Activated CD8-positive, alpha-beta T cell treated with anti-CD3 and anti-CD28 coated beads, Interleukin-2, amount 10 ng/mL, durations not matched to agents 7 days and 5 days (primary cell): ENCODE measurements at regions of chr9 and their contacts with region 1.

Region 1: GRCh38 chr9:128846680-128847030 is 17.1 kb upstream of the SPOUT1 start:
- DNase-seq: no peak
- ATAC-seq: no peak
- H3K4me3 Mint-ChIP-seq: no peak overlapping the region
- H3K27ac Mint-ChIP-seq: no peak overlapping the region
- H3K4me1 Mint-ChIP-seq: peaks cover 3% of the 10 kb centered on the region
- H3K27me3 Mint-ChIP-seq: no peaks in the 10 kb centered on the region

Region 2: DNA sequence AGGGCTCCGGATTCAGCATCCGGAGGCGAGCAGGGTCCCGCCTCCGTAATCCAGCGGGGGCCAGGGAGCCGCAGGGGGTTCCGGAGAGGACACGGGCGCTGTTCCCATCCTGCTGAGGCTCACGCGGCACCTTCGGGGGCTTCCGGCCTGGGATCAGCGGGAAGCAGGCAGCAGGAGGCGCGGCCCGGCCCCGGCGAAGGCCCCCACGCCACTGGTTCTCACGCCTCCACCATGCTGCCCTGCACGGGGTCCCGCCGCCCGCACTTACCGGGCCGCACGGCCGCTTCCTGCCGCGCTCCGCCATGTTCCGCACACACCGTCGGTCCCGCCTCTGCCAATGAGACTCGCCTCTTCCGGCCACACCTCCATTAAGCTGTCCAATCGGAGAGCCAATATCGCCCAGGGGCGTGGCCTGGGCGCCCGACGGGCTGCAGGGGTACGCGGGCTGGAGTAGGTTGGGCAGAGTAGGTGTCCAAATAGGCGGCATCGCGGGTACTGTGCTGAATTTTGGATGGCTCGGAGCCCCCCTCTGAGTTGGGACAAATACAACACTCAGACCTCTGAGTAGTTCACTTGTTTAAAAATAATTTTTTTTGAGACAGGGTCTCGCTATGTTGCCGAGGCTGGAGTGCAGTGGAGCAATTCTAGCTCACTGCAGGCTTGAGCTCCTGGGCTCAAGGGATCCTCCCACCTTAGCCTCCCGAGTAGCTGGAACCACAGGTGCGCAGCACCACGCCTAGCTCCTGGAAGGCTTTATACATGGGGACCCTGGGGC is 17.0 kb before region 1 on chr9 and contains the start of gene SPOUT1:
- CTCF ChIA-PET with region 1: no interaction called
- POLR2A ChIA-PET with region 1: no interaction called
- DNase-seq: peak; percentile 95
- ATAC-seq: peak; percentile 98
- H3K4me3 Mint-ChIP-seq: peak within 1 kb of the TSS; percentile 95
- H3K27ac Mint-ChIP-seq: peak within 1 kb of the TSS; percentile 91
- H3K4me1 Mint-ChIP-seq: peaks cover 28% of the 10 kb centered on the region
- H3K27me3 Mint-ChIP-seq: no peaks in the 10 kb centered on the region
- total RNA-seq, gene SPOUT1: 77.3 to 81.2 TPM

Region 3: GRCh38 chr9:128863647-128864046 is 17.0 kb after region 1 on chr9:
- CTCF ChIA-PET with region 1: interaction called, 16 read pairs
- POLR2A ChIA-PET with region 1: no interaction called
- DNase-seq: peak; percentile 91
- ATAC-seq: peak; percentile 98
- H3K4me3 Mint-ChIP-seq: no peak overlapping the region
- H3K27ac Mint-ChIP-seq: no peak overlapping the region
- H3K4me1 Mint-ChIP-seq: peaks cover 11% of the 10 kb centered on the region
- H3K27me3 Mint-ChIP-seq: no peaks in the 10 kb centered on the region

Region 4: GRCh38 chr9:129131300-129132145 is 284.9 kb after region 1 on chr9:
- CTCF ChIA-PET with region 1: no interaction called
- POLR2A ChIA-PET with region 1: no interaction called
- DNase-seq: peak; percentile 89
- ATAC-seq: peak; percentile 97
- H3K4me3 Mint-ChIP-seq: no peak overlapping the region
- H3K27ac Mint-ChIP-seq: no peak overlapping the region
- H3K4me1 Mint-ChIP-seq: peaks cover 7% of the 10 kb centered on the region
- H3K27me3 Mint-ChIP-seq: no peaks in the 10 kb centered on the region